ENCODE measurements at regions of chr7 and their contacts with region 1.

Region 1: GRCh38 chr7:1103009-1103788 is 15.3 kb downstream of the GPER1 start:
- DNase-seq: peak; percentile 4
- H3K4me3 Mint-ChIP-seq: peak overlapping the region; percentile 30
- H3K27ac Mint-ChIP-seq: peak overlapping the region; percentile 26
- H3K4me1 Mint-ChIP-seq: peaks cover 27% of the 10 kb centered on the region
- H3K27me3 Mint-ChIP-seq: no peaks in the 10 kb centered on the region

Region 2: GRCh38 chr7:699061-699807 is 404.0 kb before region 1 on chr7:
- intact Hi-C with region 1: no loop called
- DNase-seq: no peak
- H3K4me3 Mint-ChIP-seq: no peak overlapping the region
- H3K27ac Mint-ChIP-seq: no peak overlapping the region
- H3K4me1 Mint-ChIP-seq: no peaks in the 10 kb centered on the region
- H3K27me3 Mint-ChIP-seq: no peaks in the 10 kb centered on the region

Region 3: GRCh38 chr7:992709-993607 is 110.2 kb before region 1 on chr7:
- intact Hi-C with region 1: no loop called
- DNase-seq: peak; percentile 86
- H3K4me3 Mint-ChIP-seq: no peak overlapping the region
- H3K27ac Mint-ChIP-seq: peak overlapping the region; percentile 40
- H3K4me1 Mint-ChIP-seq: peaks cover 5% of the 10 kb centered on the region
- H3K27me3 Mint-ChIP-seq: no peaks in the 10 kb centered on the region

Region 4: DNA sequence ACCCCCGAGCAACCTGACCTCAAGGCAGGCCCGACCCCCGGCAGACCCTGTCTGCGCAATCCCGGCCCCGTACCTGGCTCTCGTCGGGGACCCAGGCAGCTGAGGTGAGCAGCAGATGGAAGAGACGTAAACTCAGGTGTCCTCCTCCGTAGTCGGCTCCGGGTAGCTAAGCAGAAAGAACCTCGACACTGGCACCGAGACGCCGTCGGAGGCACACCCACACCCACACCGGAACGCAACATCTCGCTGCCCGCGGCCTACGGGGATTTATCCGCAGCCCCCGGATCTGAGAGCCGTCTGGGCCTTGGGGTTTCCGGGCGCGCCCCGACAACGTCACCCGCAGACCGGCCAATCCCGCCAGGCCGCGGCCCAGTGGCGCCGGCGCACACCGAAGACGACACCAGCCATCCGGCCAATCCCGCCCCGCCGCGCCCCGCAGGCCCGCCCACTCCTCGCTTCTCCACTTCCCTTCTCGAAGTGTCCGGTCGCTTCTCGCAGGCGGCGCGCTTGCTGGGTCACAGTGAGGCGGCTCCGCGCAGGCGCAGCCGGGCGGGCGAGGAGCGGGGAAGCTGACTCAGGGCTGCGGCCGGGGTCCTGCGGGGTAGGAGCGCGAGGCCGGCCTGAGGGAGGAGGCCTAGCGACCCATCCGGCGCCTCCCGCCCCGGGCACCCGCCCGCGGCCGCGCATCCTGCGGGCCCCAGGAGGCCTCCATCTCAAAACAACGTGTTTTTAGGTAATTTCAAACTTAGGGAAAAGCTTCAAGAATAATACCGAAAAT is 56.9 kb after region 1 on chr7 and contains the start of gene ZFAND2A:
- intact Hi-C with region 1: loop called (anchors 1 kb)
- DNase-seq: peak; percentile 99
- H3K4me3 Mint-ChIP-seq: peak within 1 kb of the TSS; percentile 93
- H3K27ac Mint-ChIP-seq: peak within 1 kb of the TSS; percentile 80
- H3K4me1 Mint-ChIP-seq: peaks cover 28% of the 10 kb centered on the region
- H3K27me3 Mint-ChIP-seq: no peaks in the 10 kb centered on the region
- total RNA-seq, gene ZFAND2A: 21.2 and 21.9 TPM in 2 replicates

Measured in activated T-helper 1 cell treated with anti-CD3 and anti-CD28 coated beads, Interleukin-12 subunit alpha, Interleukin-12 subunit beta, Interleukin-2, Interleukin-4 antibody, amounts not matched to agents 30 ng/mL and 10 ng/mL and 1 ng/mL, durations not matched to agents 14 hours and 24 hours and 36 hours (primary cell).